A673 (cell line): ENCODE measurements at regions of chr22 and their contacts with region 1.

Region 1: DNA sequence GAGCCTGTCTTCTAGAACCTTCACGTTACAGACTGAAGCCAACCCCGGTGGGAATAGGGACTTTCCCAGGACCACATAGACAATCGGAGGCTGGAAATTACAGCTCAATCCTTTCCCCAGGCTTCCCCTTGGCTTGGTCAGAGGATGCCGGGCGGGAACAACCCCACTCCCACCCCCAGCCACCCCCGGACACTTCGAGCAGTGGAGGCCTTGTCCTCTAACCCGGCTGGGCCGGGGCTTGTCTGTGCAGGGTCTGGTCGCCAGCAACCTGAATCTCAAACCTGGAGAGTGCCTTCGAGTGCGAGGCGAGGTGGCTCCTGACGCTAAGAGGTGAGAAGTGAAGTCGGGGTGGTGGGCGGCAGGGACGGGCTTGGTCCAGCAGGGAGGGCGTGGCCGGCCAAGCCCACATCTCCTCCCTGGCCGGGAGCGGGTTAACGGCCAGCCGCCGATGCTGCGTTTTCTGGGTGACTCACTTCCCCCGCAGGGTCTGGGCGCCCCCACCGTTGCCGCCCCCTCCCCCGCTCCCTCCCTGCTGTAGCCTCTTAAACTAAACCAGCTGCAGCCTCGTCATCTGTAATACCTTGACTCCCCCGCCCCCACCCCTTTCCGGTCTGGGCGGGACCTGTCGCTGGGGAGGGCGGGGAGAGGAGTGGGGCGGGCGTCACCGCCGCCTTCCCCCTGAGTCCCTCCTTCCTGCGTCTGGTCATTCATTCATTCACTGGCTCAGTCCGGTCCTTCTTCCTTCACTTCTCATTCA is 1.5 kb downstream of the LGALS1 start:
- DNase-seq: peak; percentile 95
- H3K4me3 ChIP-seq: peak overlapping the region; percentile 59
- H3K27ac ChIP-seq: peak overlapping the region; percentile 92
- H3K4me1 ChIP-seq: peaks cover 24% of the 10 kb centered on the region
- H3K27me3 ChIP-seq: no peaks in the 10 kb centered on the region
- CTCF ChIP-seq: no peak

Region 2: GRCh38 chr22:37804881-37805813 is 128.2 kb after region 1 on chr22:
- CTCF ChIA-PET with region 1: no interaction called
- POLR2A ChIA-PET with region 1: interaction called, 3 read pairs
- intact Hi-C with region 1: loop called (anchors 5 kb)
- DNase-seq: peak; percentile 88
- H3K4me3 ChIP-seq: peak overlapping the region; percentile 77
- H3K27ac ChIP-seq: peak overlapping the region; percentile 89
- H3K4me1 ChIP-seq: peaks cover 31% of the 10 kb centered on the region
- H3K27me3 ChIP-seq: no peaks in the 10 kb centered on the region
- CTCF ChIP-seq: no peak